AG04449 (cell line): ENCODE measurements at regions of chr15 and their contacts with region 1.

Region 1: DNA sequence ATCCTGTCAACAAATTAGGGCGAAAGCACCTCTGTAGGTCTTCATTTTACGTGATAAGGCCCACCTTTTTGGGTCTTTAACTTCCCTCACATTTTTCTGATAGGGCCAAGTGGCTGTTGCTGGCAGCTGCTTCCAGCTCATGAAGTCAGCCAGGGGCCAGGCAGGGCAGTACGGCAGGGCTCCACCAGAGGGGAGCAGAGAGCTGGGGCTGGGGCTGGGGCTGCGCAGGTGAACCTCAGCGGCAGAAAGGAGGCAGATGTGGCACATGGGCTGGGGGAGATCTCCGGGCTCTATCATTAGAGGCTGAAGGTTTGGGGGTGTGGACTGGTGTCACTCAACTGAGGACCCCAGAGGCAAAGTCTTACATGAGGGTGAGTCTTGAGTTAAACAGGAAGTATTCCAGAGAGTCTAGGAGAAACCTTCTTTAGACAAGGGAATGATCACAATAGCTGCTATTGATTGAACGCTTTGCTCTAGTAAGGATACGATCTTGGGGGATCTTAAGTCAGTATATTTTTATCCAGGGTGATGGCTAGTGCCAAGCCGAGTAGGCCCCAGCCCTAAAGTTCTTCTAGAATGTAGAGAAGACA is 62.8 kb upstream of the MEX3B start:
- DNase-seq: no peak
- H3K4me3 ChIP-seq: no peak overlapping the region
- CTCF ChIP-seq: peak; percentile 95

Region 2: DNA sequence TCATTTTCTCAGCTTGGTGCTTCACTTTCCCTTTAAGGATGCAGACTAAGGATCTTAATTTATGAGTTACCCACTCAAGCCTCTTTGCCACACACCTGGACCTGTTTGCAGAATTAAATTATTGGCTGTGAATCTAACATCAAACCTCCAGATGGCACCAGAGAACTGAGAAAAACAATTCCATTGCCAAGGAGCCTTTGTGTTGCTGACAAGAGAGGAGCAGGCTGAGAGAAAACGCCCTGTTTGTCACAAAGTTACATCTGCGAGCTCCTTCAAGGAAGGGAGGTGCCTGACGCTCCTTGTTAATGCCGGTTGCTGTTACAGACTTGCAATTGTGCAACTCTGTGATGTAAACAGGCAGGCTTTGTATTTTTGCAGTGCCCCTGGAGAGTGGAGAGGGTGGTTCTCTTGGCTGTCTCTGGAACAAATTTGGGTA is 698.2 kb before region 1 on chr15:
- CTCF ChIA-PET with region 1: interaction called, 17 read pairs
- POLR2A ChIA-PET with region 1: no interaction called
- DNase-seq: peak; percentile 12
- H3K4me3 ChIP-seq: no peak overlapping the region
- CTCF ChIP-seq: peak; percentile 46

Region 3: GRCh38 chr15:82081914-82082762 is 26.4 kb before region 1 on chr15:
- CTCF ChIA-PET with region 1: interaction called, 15 read pairs
- POLR2A ChIA-PET with region 1: no interaction called
- DNase-seq: peak; percentile 93
- H3K4me3 ChIP-seq: no peak overlapping the region
- CTCF ChIP-seq: peak; percentile 29

Region 4: DNA sequence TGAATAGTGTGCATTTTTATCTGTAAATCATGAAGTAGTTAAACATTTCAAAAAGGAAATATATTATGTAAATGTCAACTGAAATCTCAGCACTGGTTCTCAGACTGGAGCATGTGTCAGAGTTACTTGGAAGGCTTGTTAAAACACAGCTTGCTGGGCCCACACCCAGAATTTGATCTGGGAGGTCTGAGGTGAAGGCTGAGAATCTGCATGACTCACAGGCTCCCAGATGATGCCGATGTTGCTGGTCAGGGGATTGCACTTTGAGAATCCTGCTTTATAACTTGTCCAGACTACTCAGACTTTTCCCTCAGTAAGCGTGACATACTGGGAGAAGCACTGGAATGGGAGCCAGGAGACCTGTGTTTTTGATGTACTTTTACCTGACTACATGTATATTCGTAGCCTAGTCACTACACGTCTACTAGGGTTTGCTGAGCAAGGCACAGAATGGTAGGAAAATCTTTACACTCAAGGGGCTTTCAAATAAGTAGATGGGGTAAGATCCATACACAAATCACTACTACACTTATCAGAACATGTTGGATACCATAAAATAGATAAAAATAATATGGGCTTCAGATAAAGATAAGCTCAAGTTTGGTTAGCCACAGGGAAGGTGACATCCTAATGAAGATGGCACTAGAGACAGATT is 14.3 kb after region 1 on chr15:
- CTCF ChIA-PET with region 1: interaction called, 112 read pairs
- POLR2A ChIA-PET with region 1: interaction called, 9 read pairs
- DNase-seq: peak; percentile 97
- H3K4me3 ChIP-seq: no peak overlapping the region
- CTCF ChIP-seq: no peak

Region 5: DNA sequence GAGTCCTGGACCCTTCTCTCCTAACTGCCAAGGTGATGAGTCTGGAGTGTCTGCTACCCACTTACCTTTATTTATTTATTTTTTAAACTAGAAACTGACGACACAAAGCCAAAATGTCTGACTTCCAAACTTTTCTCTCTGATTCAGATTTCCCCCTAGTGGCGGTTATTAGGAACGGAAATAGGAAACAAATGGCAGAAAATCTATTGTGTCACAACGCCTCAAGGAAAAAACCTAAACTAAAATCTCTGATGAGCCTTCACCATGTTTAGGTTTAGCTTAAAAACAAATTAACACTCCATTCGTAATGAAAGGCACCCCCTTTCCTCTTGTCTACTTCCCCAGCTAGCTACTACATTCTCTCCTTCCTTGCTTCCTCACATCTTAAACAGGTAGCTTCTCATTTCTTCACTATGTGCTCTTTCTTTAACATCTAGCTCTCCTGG is 31.3 kb after region 1 on chr15:
- CTCF ChIA-PET with region 1: interaction called, 93 read pairs
- POLR2A ChIA-PET with region 1: no interaction called
- DNase-seq: no peak
- H3K4me3 ChIP-seq: no peak overlapping the region
- CTCF ChIP-seq: peak; percentile 48

Region 6: DNA sequence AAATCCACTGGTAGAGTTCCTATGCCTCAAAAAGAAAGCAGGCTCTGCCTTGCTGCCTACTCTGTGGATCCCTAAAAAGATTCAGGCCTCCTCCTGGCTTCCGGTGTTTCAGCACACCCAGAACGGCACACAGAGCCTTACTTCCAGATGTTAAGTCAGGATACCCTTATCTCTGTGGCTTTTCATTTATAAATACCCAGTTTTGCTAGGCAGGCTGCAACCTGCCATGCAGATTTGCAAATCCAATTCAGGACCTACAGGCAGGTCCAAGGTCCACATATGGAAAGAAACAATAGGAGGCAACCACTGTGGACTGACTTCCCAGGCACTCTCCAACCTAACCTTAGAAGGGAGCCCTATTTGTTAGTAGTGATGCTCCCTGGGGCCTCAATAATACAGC is 123.3 kb after region 1 on chr15:
- CTCF ChIA-PET with region 1: no interaction called
- POLR2A ChIA-PET with region 1: no interaction called
- DNase-seq: no peak
- H3K4me3 ChIP-seq: no peak overlapping the region
- CTCF ChIP-seq: no peak